Right lobe of liver (tissue), 6 donors: ENCODE measurements at regions of chr20 and their contacts with region 1.

Region 1: GRCh38 chr20:38893565-38894090 is 32.6 kb upstream of the FAM83D start:
- DNase-seq: peak; percentile 72 to 77 (median 73)
- ATAC-seq: peak; percentile 89 to 95 (median 94)
- H3K4me3 ChIP-seq: no peak overlapping the region
- H3K27ac ChIP-seq: no peak overlapping the region
- H3K4me1 ChIP-seq: peaks cover 0 to 3% (median 0%) of the 10 kb centered on the region in 4 donors
- H3K27me3 ChIP-seq: no peaks in the 10 kb centered on the region
- CTCF ChIP-seq: peak; percentile 72 to 94 (median 90)
- POLR2A ChIP-seq: no peak

Region 2: DNA sequence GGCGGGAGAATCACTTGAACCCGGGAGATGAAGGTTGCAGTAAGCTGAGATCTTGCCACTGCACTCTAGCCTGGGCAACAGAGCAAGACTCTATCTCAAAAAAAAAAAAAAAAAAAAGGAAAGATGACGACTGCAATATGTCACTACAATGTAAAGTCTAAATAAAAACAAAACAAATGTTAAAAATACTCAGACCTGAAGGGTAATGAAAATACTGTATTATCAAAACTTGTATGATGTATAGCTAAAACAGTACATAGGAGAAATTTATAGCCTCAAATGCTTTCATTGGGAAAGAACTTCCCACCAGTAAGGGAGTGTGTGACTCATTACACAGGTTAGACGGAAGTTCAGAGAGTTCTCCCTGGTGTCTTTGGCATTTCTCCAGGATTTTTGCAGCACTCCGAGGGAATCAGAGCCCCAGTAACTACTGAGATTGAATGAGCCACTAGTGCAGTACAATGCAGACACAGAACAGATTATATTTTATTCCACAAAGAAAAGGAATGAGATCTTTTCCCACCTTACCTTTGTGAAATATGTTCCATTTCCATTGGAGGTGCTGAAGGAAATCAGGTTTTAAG is 433.5 kb before region 1 on chr20:
- intact Hi-C with region 1: no loop called
- DNase-seq: no peak
- ATAC-seq: peak; percentile 88 to 99 (median 91)
- H3K4me3 ChIP-seq: no peak overlapping the region
- H3K27ac ChIP-seq: no peak overlapping the region
- H3K4me1 ChIP-seq: no peaks in the 10 kb centered on the region
- H3K27me3 ChIP-seq: no peaks in the 10 kb centered on the region
- CTCF ChIP-seq: no peak
- POLR2A ChIP-seq: no peak

Region 3: DNA sequence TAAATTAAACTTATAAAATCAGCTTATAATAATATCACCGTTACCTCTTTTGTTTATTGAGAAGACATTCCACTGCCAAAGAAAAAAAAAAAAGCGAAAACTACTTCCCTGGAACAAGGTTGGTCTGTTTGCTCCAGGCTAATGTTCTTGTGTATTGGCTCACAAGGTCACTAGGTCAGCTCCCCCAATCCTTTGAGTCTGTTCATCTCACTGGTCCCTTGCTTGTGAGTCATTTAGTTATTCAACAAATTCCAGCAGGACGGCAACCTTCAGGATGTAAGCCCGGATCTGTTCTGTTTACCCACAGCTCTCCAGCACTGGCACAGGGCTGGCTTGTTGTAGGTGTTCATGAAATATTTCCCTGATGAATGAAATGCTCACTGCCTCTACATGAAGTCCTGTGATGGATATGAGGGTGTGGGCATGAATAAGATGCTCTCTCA is 288.7 kb before region 1 on chr20:
- intact Hi-C with region 1: no loop called
- DNase-seq: no peak
- ATAC-seq: peak in 1 of 4 donors; percentile 90
- H3K4me3 ChIP-seq: no peak overlapping the region
- H3K27ac ChIP-seq: no peak overlapping the region
- H3K4me1 ChIP-seq: no peaks in the 10 kb centered on the region
- H3K27me3 ChIP-seq: no peaks in the 10 kb centered on the region
- CTCF ChIP-seq: no peak
- POLR2A ChIP-seq: no peak

Region 4: GRCh38 chr20:38658879-38659596 is 234.6 kb before region 1 on chr20:
- intact Hi-C with region 1: loop called in 1 of 2 experiments (anchors 10 kb)
- DNase-seq: peak in 1 of 3 donors; percentile 37
- ATAC-seq: peak; percentile 76 to 86 (median 81)
- H3K4me3 ChIP-seq: no peak overlapping the region
- H3K27ac ChIP-seq: no peak overlapping the region
- H3K4me1 ChIP-seq: no peaks in the 10 kb centered on the region
- H3K27me3 ChIP-seq: no peaks in the 10 kb centered on the region
- CTCF ChIP-seq: peak; percentile 46 to 68 (median 56)
- POLR2A ChIP-seq: no peak

Region 5: GRCh38 chr20:38853759-38854158 is 39.9 kb before region 1 on chr20:
- intact Hi-C with region 1: no loop called
- DNase-seq: no peak
- ATAC-seq: no peak
- H3K4me3 ChIP-seq: no peak overlapping the region
- H3K27ac ChIP-seq: no peak overlapping the region
- H3K4me1 ChIP-seq: no peaks in the 10 kb centered on the region
- H3K27me3 ChIP-seq: no peaks in the 10 kb centered on the region
- CTCF ChIP-seq: no peak
- POLR2A ChIP-seq: no peak